ENCODE measurements at regions of chr1 and their contacts with region 1.

Region 1: DNA sequence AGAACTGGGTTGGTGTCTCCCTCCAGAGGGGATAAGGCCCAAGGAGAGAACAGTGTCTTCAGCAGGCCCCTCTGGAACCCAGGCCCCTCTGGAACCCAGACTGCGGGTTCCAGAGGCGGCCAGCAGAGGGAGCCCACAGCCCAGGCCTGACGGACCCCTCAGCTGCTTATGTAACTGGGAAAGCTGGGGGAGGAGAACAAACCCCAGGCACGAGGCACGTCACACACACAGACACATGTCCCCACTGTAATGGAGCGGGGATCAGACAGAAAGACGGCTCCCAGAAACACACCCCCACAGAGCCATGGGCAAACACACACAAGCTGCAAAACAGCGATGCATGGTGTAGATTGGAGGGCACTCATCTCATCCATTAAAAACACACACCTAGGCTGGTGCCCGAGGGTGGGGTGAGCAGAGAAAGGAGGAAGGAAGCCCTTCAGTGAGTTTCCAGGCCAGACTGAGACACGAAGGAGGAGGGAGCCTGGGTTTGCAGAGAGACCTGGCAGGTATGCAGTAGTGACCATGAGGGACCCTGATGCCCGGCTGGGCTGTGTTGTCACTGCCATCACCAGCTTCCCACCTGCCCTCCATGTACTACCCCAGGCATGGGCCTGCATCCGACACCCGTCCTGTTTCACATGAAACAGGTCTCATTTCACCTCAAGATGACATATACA is 2.8 kb upstream of the IGSF8 start:
- DNase-seq: peak; percentile 77

Region 2: GRCh38 chr1:159756397-159756796 is 344.8 kb before region 1 on chr1:
- in situ Hi-C with region 1: no loop called
- DNase-seq: no peak

Region 3: GRCh38 chr1:159945483-159946241 is 155.5 kb before region 1 on chr1 and contains the start of gene IGSF9:
- in situ Hi-C with region 1: no loop called
- DNase-seq: no peak
- total RNA-seq, gene IGSF9: 0.03 TPM in 1 of 2 replicates, not detected in the other

Region 4: GRCh38 chr1:160006312-160006940 is 94.8 kb before region 1 on chr1:
- in situ Hi-C with region 1: no loop called
- DNase-seq: peak; percentile 30

Region 5: DNA sequence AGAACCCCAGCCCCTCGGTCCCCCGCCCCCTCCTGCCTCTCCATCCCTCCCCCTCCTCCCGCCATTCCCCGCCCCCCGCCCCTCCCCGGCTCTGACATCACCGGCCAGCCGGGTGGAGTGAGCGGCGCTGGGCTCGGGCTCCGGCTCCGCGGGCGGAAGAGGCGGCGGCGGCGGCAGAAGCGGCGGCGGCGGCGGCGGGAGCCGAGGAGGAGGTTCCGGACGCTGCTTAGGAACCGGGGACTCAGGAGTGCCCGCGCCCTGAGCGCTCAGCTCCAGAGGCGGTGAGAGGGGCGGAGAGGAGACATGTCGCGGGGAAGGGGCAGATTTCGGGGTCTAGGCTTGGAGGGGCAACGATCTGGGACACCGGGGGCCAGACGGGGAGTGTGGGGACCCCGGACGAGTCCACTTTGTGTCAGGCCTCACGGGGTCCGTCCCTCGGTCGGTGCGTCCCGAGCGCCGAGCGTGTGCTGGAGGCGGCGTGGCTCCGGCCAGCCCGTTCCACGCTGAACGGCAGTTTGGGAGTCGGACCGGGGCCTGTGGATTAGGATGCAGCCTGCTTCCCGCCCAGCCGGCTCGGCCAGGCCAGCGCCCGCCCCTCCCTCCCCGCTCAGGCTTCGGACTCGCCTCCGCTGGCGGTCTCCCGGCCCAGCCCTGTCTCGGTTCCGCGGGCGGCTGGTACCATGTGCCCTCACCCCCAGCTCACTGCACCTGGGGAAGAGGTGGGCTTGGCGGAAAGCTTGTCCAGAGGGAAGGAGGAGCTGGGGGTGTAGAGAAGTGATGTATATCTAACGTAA is 104.3 kb after region 1 on chr1 and contains the start of gene PEA15:
- in situ Hi-C with region 1: loop called (anchors 10 kb)
- DNase-seq: peak; percentile 45
- total RNA-seq, gene PEA15: 97.4 and 114 TPM in 2 replicates

Region 6: GRCh38 chr1:160438317-160438918 is 337.2 kb after region 1 on chr1:
- in situ Hi-C with region 1: no loop called
- DNase-seq: no peak